K562 (cell line): ENCODE measurements at regions of chr3 and their contacts with region 1.

Region 1: DNA sequence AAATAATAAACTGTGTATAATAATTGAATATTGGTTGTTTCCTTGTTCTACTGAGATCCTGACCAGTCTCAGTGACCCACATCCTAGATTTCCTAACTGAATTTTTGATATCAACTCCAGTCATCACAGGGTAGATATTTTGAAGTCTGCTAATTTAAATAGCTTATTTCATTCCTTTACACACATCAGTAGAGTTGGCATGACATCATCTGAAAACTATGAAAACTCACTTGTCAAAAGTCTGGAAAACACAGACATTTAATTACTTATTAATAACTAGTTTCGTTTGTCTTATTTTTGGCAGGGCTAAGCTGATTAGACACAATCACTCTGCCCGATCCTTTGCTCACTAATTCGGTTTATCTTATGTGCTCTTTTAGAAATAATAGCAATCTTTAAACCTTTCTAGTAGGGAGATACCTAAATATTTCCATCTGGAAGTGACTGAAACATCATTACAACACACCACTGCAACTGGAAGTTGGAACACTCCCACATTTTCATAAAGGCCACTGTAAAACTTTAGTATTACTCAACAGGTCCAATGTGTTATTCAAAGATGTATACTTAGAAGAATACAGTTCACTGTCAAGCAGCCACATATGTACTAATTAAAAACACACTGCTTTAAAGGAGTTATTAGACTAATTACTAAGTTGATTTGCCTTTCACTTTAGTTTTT is 198.4 kb upstream of the ZNF717 start:
- DNase-seq: no peak
- ATAC-seq: no peak
- H3K4me3 ChIP-seq: no peak overlapping the region
- H3K27ac ChIP-seq: no peak overlapping the region
- H3K4me1 ChIP-seq: no peaks in the 10 kb centered on the region
- H3K27me3 ChIP-seq: no peaks in the 10 kb centered on the region
- CTCF ChIP-seq: no peak
- EP300 ChIP-seq: no peak
- POLR2A ChIP-seq: no peak
- RAD21 ChIP-seq: no peak

Region 2: GRCh38 chr3:76096836-76097588 is 113.3 kb after region 1 on chr3:
- CTCF ChIA-PET with region 1: no interaction called
- POLR2A ChIA-PET with region 1: no interaction called
- in situ Hi-C with region 1: no loop called
- intact Hi-C with region 1: no loop called
- DNase-seq: no peak
- ATAC-seq: no peak
- H3K4me3 ChIP-seq: no peak overlapping the region
- H3K27ac ChIP-seq: no peak overlapping the region
- H3K4me1 ChIP-seq: no peaks in the 10 kb centered on the region
- H3K27me3 ChIP-seq: no peaks in the 10 kb centered on the region
- CTCF ChIP-seq: no peak
- EP300 ChIP-seq: no peak
- POLR2A ChIP-seq: no peak
- RAD21 ChIP-seq: no peak

Region 3: DNA sequence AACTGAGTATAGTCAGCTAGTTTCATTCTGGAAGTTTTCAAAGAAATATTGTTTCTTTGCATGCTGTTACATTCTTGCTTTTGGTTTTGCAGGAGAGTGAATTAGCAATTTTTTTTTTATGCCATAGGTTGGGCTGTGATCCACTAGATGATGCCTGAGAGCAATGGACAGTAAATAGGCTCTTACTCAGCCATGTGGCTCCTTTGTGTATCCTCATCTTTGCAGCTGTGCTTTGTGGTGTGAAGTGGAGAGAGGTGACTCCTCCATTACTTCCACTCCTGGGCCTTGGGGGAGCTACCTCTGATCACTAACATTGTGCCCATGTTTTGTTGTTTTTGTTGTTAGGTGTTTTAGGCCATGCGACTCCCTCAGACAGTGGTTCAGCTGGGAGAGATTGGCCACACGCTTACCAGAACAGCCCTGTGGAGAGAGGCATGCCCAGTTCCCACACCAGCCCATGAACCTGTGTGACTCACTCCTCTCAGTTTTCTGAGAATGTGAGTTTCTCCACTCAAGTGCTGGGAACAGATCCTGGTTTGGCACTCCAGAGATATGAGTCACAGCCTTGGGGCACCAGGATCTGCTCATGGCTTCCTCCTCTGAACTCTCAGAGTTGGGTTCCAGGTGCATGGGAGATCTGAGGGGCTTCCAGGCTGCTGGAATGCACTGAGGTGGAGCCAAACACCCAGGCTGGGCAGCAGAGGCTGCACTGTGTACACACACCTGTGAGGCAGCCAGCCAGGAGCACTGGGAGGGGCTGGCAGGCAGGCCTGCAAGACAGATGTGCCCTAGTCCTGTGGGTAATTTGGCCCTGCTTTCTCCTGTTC is 1841.5 kb after region 1 on chr3:
- CTCF ChIA-PET with region 1: no interaction called
- POLR2A ChIA-PET with region 1: no interaction called
- in situ Hi-C with region 1: loop called (anchors 25 kb)
- intact Hi-C with region 1: no loop called
- DNase-seq: no peak
- ATAC-seq: no peak
- H3K4me3 ChIP-seq: no peak overlapping the region
- H3K27ac ChIP-seq: no peak overlapping the region
- H3K4me1 ChIP-seq: no peaks in the 10 kb centered on the region
- H3K27me3 ChIP-seq: no peaks in the 10 kb centered on the region
- CTCF ChIP-seq: no peak
- EP300 ChIP-seq: no peak
- POLR2A ChIP-seq: no peak
- RAD21 ChIP-seq: no peak